GM10248 (cell line): ENCODE measurements at regions of chr2 and their contacts with region 1.

Region 1: DNA sequence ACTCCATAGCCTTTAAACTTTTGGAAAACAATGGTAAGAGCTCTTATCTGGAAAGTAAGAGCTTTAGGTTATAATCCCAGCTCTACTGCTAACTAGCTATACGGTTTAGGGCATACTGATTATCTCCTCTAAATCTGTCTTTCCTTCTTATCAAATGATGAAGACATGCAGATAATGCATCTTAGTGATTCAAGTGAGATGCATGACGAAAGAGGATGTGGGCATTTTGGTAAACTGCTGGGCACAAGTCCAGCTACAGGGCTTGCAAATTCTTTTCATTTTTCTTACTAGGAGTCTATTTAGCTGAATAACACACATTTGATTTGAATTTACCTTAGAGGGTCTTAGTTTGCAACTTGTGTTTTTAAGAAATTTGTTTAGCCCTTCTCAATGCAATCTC is 1604.8 kb upstream of the ZEB2 start:
- DNase-seq: no peak
- CTCF ChIP-seq: no peak

Region 2: DNA sequence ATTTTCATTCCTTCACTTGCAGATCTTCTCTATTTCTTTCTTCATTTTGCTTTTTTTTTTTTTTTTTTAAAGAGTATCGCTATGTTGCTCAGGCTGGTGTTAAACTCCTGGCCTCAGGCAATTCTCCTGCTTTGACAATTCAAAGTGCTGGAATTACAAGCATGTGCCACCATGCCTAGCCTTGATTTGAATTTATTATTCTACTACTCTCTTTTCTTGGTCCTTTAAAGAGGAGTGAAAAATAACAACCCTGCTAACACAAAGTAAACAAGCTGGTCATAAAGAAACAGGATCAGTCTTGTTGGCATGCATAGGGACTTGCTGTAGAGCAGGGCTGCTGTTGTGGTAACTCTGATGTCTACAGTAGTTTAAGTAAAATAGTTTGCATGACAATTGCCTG is 10.5 kb after region 1 on chr2:
- CTCF ChIA-PET with region 1: interaction called, 10 read pairs
- POLR2A ChIA-PET with region 1: no interaction called
- DNase-seq: no peak
- CTCF ChIP-seq: no peak